ENCODE measurements at regions of chr6 and their contacts with region 1.

Region 1: GRCh38 chr6:25017932-25018567 is 82.3 kb upstream of the RIPOR2 start:
- DNase-seq: peak; percentile 66 to 75
- H3K4me3 ChIP-seq: no peak overlapping the region
- H3K27ac ChIP-seq: no peak overlapping the region
- H3K4me1 ChIP-seq: peaks cover 0 to 10% (median 0%) of the 10 kb centered on the region in 4 experiments; a peak in 4 of 7 replicates
- H3K27me3 ChIP-seq: no peaks in the 10 kb centered on the region
- CTCF ChIP-seq: peak; percentile 43 to 94 (median 91)
- EP300 ChIP-seq: no peak
- POLR2A ChIP-seq: no peak
- RAD21 ChIP-seq: peak; percentile 100

Region 2: DNA sequence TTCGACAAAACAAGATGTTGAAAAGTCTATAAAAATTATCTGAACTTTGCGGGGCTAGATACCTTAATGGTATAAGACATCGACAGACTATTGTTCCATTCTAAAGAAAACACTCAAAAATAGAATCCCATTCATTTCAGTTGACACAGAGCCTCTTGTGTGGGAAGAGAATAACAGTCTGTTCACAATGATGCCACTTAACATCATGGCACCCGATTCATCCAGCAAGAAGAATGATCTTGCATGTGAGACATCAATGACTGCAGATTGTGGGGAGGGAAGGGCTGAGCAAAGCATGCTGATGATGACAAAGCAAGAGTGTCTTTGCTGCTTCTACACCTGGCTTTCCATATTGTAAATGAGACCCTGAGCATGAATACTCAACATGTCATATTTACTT is 169.6 kb before region 1 on chr6:
- CTCF ChIA-PET with region 1: interaction called, 23 read pairs
- POLR2A ChIA-PET with region 1: no interaction called
- DNase-seq: no peak
- H3K4me3 ChIP-seq: no peak overlapping the region
- H3K27ac ChIP-seq: no peak overlapping the region
- H3K4me1 ChIP-seq: no peaks in the 10 kb centered on the region
- H3K27me3 ChIP-seq: no peaks in the 10 kb centered on the region
- CTCF ChIP-seq: no peak
- EP300 ChIP-seq: no peak
- POLR2A ChIP-seq: no peak
- RAD21 ChIP-seq: no peak

Region 3: DNA sequence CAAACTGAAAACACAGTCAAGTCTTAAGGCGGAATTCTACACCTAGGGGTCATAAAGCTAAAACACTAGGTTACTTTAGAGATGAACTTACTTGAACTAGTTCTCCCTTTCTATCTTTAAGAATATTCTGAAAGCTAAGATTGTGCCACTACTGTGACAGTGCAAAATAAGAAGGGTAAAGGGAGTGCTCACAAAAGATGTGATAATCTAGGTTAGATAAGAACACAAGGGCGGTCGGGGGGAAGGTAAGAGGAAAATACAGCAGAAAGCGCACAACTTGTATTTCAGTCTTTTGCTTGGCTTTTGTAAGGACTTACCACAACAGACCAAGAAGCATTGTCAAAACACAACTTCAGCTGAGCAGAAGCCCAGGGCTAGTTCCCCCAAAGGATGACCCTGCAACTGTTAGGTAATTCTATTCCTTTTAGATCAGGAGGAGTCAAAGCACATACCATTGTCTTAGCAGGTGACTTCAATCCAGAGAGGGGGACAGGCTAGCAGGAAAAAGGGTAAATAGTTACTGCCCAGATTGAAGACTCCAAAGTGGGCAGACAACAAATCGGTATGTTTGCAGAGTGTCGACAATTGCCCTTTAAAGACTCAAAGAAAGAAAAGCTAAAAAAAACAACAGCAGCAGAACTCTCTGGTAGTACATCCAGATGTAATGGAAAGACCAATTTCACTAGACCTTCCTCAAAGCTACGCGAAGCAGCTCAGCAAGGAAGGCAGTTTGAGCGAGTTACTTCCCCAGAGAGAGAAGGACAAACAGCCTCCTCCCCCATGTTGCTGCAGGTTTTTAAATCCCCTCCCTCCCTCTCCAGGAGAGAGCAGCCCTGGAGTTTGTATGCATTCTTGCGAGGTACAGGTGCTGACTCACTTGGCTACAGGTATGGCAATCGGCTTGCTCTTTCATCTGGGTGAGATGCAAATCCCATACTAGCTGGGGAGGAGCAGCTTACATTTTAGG is 141.3 kb before region 1 on chr6:
- CTCF ChIA-PET with region 1: interaction called, 12 read pairs
- POLR2A ChIA-PET with region 1: interaction called, 3 read pairs
- DNase-seq: peak in 1 of 2 experiments; percentile 66
- H3K4me3 ChIP-seq: peak overlapping the region in 3 of 4 experiments; percentile 15 to 48 (median 21); a peak in 5 of 8 replicates
- H3K27ac ChIP-seq: peak overlapping the region; percentile 78
- H3K4me1 ChIP-seq: peaks cover 0 to 31% (median 16%) of the 10 kb centered on the region in 4 experiments; a peak in 6 of 7 replicates
- H3K27me3 ChIP-seq: no peaks in the 10 kb centered on the region
- CTCF ChIP-seq: no peak
- EP300 ChIP-seq: 0 out of 3 replicates have a peak, but pooled peaks of 1 of the 2 experiments have one; percentile 51
- POLR2A ChIP-seq: peak; percentile 66 to 83
- RAD21 ChIP-seq: peak in 1 of 2 experiments; percentile 34; a peak in 3 of 4 replicates

Region 4: GRCh38 chr6:24910961-24911712 is 106.9 kb before region 1 on chr6:
- CTCF ChIA-PET with region 1: interaction called, 30 read pairs
- POLR2A ChIA-PET with region 1: interaction called, 5 read pairs
- DNase-seq: no peak
- H3K4me3 ChIP-seq: peak overlapping the region; percentile 57 to 79 (median 68)
- H3K27ac ChIP-seq: no peak overlapping the region
- H3K4me1 ChIP-seq: peaks cover 3 to 15% (median 12%) of the 10 kb centered on the region in 4 experiments; a peak in 6 of 7 replicates
- H3K27me3 ChIP-seq: peaks cover 0 to 29% (median 20%) of the 10 kb centered on the region in 4 experiments; a peak in 5 of 7 replicates
- CTCF ChIP-seq: no peak
- EP300 ChIP-seq: no peak
- POLR2A ChIP-seq: no peak
- RAD21 ChIP-seq: no peak

Region 5: DNA sequence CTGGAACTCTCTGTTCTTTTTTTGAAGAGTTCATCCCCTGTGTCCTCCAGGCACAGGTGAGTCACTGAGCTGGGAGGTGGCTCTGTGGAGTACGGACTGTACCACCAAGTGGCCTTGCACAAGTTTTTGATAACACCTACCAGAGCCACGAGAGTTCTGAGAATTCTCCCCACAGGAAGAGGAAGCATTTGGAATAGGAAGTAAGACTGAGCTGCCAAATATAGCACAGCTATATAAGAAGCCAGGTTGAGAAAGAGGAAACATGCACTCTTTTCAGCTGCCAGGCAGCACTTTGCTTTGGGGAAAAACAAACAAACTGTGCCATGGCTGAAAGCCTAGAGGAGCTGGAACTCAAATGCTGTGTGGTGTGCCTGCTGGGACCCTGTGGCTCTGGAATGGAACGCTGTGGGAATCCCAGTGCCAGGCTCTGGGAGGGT is 11.5 kb before region 1 on chr6:
- CTCF ChIA-PET with region 1: interaction called, 28 read pairs
- POLR2A ChIA-PET with region 1: no interaction called
- DNase-seq: no peak
- H3K4me3 ChIP-seq: no peak overlapping the region
- H3K27ac ChIP-seq: no peak overlapping the region
- H3K4me1 ChIP-seq: peaks cover 0 to 4% (median 2%) of the 10 kb centered on the region in 4 experiments; a peak in 2 of 7 replicates
- H3K27me3 ChIP-seq: no peaks in the 10 kb centered on the region
- CTCF ChIP-seq: no peak
- EP300 ChIP-seq: no peak
- POLR2A ChIP-seq: no peak
- RAD21 ChIP-seq: no peak

Region 6: DNA sequence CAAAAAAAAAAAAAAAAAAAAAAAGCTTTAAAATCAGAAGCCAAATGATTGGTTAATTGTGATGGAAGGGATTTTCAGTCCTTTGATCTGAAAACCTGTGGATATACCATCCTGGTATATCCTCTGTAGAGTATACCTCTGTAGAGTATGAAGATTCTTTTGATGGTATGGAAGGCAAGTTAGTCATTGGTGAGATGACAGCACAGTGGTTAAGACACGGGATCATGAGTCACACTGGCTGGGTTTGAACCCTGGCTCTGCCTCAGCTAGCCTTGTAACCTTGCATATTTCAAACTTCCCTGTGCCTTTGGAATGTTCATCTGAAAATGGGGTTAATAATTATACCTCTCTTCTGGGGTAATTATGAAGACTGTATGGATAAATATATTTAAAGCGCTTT is 440.4 kb after region 1 on chr6:
- CTCF ChIA-PET with region 1: no interaction called
- POLR2A ChIA-PET with region 1: no interaction called
- DNase-seq: no peak
- H3K4me3 ChIP-seq: no peak overlapping the region
- H3K27ac ChIP-seq: no peak overlapping the region
- H3K4me1 ChIP-seq: peaks cover 2 to 9% (median 5%) of the 10 kb centered on the region in 4 experiments; a peak in 4 of 7 replicates
- H3K27me3 ChIP-seq: no peaks in the 10 kb centered on the region
- CTCF ChIP-seq: no peak
- EP300 ChIP-seq: no peak
- POLR2A ChIP-seq: no peak
- RAD21 ChIP-seq: no peak